ENCODE measurements at regions of chr1 and their contacts with region 1.

Region 1: DNA sequence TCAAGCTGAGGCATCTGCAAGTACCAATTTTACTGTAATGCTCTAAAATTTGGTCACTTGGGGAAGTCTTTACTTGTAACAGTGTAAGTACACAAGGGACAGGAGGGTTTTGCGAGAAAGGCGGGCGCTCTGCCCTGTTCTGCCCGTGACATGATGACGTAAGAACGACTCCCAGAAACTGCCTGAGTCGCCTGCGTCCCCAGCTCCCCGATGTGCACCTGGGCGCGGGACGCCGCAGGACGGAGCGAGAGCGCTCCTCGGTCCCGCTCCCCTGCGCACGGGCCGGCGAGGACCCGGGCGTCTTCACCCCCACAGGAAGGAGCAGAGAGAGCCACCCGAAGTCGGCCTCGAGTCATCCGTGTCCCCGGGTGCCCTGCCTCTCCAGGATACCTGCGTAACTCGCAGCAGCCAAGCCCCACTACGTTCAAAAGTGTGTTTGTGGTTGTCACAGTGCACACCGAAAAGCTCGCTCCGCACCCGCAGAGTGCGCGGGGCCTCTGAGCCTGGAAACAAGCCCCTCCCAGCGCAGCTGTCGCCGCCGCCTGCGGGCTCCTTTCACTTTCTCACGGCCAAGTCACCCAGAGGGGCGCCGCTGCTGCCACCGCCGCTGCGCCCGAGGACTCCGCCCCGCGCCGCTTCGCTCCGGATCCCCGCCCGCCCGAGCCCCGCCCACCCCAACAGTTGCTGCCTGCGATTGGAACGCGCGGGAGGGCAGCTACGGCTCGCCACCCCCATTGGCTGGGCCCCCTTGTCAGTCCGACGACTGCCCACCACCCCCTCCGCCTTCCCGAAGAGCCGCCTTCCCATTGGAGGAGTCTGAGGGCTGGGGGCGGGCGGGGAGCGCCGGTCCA is 3.2 kb upstream of the ZBTB18 start:
- DNase-seq: peak; percentile 93 to 99 (median 97)
- H3K4me3 ChIP-seq: peak overlapping the region; percentile 77 to 99
- H3K4me3 Mint-ChIP-seq: peak overlapping the region; percentile 84 to 98 (median 95)
- H3K27ac ChIP-seq: peak overlapping the region; percentile 94
- H3K27ac Mint-ChIP-seq: peak overlapping the region; percentile 91 to 100 (median 98)
- H3K4me1 ChIP-seq: peaks cover 47% of the 10 kb centered on the region
- H3K4me1 Mint-ChIP-seq: peaks cover 21 to 28% (median 27%) of the 10 kb centered on the region in 4 donors
- H3K27me3 ChIP-seq: no peaks in the 10 kb centered on the region
- H3K27me3 Mint-ChIP-seq: peaks cover 0 to 2% of the 10 kb centered on the region in 2 donors

Region 2: DNA sequence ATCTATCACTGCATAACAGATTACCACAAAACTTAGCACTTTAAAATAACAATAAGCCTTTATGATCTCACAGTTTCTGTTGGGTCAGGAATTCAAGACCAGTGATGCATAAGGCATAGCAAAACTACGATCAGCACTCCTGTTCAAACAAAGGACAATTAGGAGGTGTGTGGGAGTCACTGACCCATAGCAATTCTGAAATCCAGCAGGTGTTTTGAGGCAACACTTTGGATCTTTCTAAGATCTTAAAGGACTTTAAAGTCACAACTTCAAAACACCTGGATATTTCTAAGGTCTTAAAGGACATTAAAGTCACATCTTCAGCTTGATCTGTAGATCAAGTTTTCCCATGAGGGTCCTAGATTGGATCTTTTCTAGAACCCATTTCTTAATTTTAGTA is 233.1 kb before region 1 on chr1:
- CTCF ChIA-PET with region 1: no interaction called
- POLR2A ChIA-PET with region 1: no interaction called
- intact Hi-C with region 1: no loop called
- DNase-seq: no peak
- H3K4me3 ChIP-seq: no peak overlapping the region
- H3K4me3 Mint-ChIP-seq: peak overlapping the region in 1 of 8 donors; percentile 22
- H3K27ac ChIP-seq: no peak overlapping the region
- H3K27ac Mint-ChIP-seq: no peak overlapping the region
- H3K4me1 ChIP-seq: no peaks in the 10 kb centered on the region
- H3K4me1 Mint-ChIP-seq: peaks cover 12 to 34% (median 23%) of the 10 kb centered on the region in 4 donors
- H3K27me3 ChIP-seq: no peaks in the 10 kb centered on the region
- H3K27me3 Mint-ChIP-seq: no peaks in the 10 kb centered on the region

Region 3: DNA sequence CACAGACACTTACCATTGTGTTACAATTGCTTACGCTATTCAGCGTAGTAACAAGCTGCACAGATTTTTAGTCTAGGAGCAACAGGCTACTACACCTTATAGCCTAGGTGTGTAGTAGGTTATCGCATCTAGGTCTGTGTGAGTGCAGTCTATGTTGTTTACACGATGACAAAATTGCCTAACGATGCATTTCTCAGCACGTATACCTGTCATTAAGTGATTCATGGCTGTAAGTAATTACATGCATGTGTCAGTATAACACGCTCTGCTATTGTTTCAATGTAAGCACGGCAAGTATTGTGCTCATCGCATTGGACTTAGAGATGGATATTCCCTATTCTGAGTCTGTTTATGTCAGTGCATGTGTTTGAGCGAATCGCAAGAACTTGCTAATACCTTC is 12.5 kb before region 1 on chr1:
- CTCF ChIA-PET with region 1: no interaction called
- POLR2A ChIA-PET with region 1: interaction called, 11 read pairs
- intact Hi-C with region 1: no loop called
- DNase-seq: no peak
- H3K4me3 ChIP-seq: no peak overlapping the region
- H3K4me3 Mint-ChIP-seq: no peak overlapping the region
- H3K27ac ChIP-seq: no peak overlapping the region
- H3K27ac Mint-ChIP-seq: no peak overlapping the region
- H3K4me1 ChIP-seq: no peaks in the 10 kb centered on the region
- H3K4me1 Mint-ChIP-seq: no peaks in the 10 kb centered on the region
- H3K27me3 ChIP-seq: no peaks in the 10 kb centered on the region
- H3K27me3 Mint-ChIP-seq: peaks cover 10 to 15% of the 10 kb centered on the region in 2 donors

Region 4: DNA sequence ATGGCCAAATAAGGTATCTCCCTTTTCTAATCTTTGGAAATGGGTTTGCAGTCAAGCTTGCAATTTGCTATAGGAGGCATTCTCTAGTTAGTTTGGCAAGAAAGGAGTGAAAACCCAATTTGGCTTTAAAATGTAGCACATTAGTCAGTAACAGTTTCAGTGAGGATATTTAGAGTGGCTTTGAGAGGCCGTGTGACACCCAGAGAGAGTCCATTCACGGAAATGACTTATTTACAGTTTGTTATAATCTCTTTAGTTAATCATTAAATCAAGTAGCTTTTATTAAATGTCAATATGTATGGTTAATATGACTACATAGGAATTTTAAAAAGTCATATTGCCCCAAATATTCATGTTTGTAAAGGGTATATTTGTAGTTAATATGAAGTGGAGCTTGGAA is 12.8 kb after region 1 on chr1:
- CTCF ChIA-PET with region 1: interaction called, 4 read pairs
- POLR2A ChIA-PET with region 1: interaction called, 28 read pairs
- intact Hi-C with region 1: no loop called
- DNase-seq: no peak
- H3K4me3 ChIP-seq: no peak overlapping the region
- H3K4me3 Mint-ChIP-seq: no peak overlapping the region
- H3K27ac ChIP-seq: no peak overlapping the region
- H3K27ac Mint-ChIP-seq: no peak overlapping the region
- H3K4me1 ChIP-seq: no peaks in the 10 kb centered on the region
- H3K4me1 Mint-ChIP-seq: peaks cover 3 to 5% (median 4%) of the 10 kb centered on the region in 4 donors
- H3K27me3 ChIP-seq: no peaks in the 10 kb centered on the region
- H3K27me3 Mint-ChIP-seq: no peaks in the 10 kb centered on the region

Region 5: GRCh38 chr1:244074559-244075171 is 26.8 kb after region 1 on chr1:
- CTCF ChIA-PET with region 1: interaction called, 16 read pairs
- POLR2A ChIA-PET with region 1: interaction called, 251 read pairs
- intact Hi-C with region 1: loop called (anchors 1 kb)
- DNase-seq: peak; percentile 80 to 88 (median 86)
- H3K4me3 ChIP-seq: peak overlapping the region; percentile 5 to 49
- H3K4me3 Mint-ChIP-seq: peak overlapping the region; percentile 88 to 96 (median 91)
- H3K27ac ChIP-seq: peak overlapping the region; percentile 27
- H3K27ac Mint-ChIP-seq: peak overlapping the region; percentile 90 to 99 (median 97)
- H3K4me1 ChIP-seq: peaks cover 32% of the 10 kb centered on the region
- H3K4me1 Mint-ChIP-seq: peaks cover 26 to 38% (median 31%) of the 10 kb centered on the region in 4 donors
- H3K27me3 ChIP-seq: no peaks in the 10 kb centered on the region
- H3K27me3 Mint-ChIP-seq: no peaks in the 10 kb centered on the region

Region 6: DNA sequence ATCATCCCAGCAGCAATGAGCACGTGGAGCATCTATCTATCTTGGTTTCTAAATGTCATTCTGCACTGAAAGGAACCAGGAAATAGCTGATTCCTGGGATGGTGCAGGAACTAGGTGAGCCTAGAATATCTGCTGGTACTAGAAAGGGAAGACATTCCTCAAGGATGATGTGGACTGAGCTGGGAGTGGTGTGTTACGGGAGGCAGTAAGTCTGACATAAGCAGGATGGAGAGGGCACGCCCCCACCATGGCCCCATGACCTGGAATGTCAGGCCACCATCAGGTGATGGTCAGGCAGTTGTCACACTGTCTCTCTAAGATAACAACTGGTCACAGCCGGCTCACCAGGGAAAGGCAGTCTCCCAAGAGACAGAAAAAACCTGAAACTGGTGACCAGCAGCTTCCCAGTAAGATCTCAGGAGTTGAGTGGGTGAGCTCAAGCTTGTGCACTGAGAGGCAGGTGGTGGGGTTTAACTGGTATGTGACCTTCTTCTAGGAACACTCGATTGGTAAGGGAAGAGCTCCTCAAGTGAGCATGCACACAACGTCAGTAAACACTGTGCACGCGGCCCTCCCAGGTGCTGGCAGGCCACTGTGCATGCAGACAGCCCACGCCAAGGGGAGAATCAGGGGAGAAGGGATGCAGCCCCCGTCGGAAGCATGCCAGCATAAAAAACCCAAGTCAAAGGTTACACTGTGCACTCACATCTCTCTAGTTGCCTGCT is 255.2 kb after region 1 on chr1:
- CTCF ChIA-PET with region 1: no interaction called
- POLR2A ChIA-PET with region 1: interaction called, 10 read pairs
- intact Hi-C with region 1: no loop called
- DNase-seq: no peak
- H3K4me3 ChIP-seq: no peak overlapping the region
- H3K4me3 Mint-ChIP-seq: no peak overlapping the region
- H3K27ac ChIP-seq: no peak overlapping the region
- H3K27ac Mint-ChIP-seq: no peak overlapping the region
- H3K4me1 ChIP-seq: peaks cover 10% of the 10 kb centered on the region
- H3K4me1 Mint-ChIP-seq: peaks cover 6 to 14% (median 8%) of the 10 kb centered on the region in 4 donors
- H3K27me3 ChIP-seq: no peaks in the 10 kb centered on the region
- H3K27me3 Mint-ChIP-seq: no peaks in the 10 kb centered on the region

Region 7: DNA sequence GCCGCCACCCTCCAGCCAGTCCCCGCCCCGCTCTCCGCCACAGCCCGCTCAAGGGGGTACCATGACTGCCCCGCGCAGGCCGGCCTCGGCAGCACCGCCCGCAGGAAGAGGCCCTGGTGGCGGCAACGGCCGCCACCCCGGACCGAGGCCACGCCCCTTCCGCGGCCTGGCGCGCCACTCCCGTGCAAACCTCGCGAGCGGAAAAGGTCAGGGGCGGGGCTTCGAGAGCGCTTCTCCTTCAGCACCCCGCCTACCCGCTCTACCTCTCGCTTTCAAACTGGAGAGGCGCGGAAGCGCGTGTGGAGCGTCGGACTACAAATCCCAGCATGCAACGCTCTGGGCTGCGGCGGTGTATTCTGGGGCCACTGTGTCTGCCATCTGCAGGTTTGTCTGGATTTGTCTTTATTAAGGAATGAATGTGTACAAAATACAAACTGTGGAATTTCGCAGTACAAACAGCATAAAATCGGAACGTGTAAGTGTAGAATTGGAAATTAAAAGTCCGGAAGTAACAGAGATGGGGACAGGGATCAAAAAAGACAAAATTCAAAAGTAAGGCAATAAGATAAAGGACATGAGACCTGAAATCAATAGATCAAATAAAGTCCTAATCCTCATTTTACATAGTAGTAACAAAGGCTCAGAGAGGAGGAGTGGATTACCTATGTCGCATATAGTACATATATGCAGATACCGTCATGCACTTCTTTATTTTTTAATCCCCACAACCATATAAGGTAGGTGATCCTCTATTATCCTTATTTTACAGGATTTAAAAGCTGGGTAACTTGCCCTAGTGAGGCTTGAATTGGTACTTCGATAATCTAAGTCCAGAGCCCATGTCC is 404.3 kb after region 1 on chr1:
- CTCF ChIA-PET with region 1: no interaction called
- POLR2A ChIA-PET with region 1: interaction called, 7 read pairs
- intact Hi-C with region 1: loop called (anchors 1 kb)
- DNase-seq: peak; percentile 98 to 99 (median 99)
- H3K4me3 ChIP-seq: peak overlapping the region in 1 of 2 donors; percentile 95
- H3K4me3 Mint-ChIP-seq: peak overlapping the region; percentile 87 to 97 (median 92)
- H3K27ac ChIP-seq: peak overlapping the region; percentile 94
- H3K27ac Mint-ChIP-seq: peak overlapping the region; percentile 87 to 100 (median 95)
- H3K4me1 ChIP-seq: peaks cover 39% of the 10 kb centered on the region
- H3K4me1 Mint-ChIP-seq: peaks cover 31 to 48% (median 35%) of the 10 kb centered on the region in 4 donors
- H3K27me3 ChIP-seq: no peaks in the 10 kb centered on the region
- H3K27me3 Mint-ChIP-seq: no peaks in the 10 kb centered on the region

Region 8: GRCh38 chr1:244652699-244653466 is 605.0 kb after region 1 on chr1 and contains the start of gene DESI2:
- CTCF ChIA-PET with region 1: no interaction called
- POLR2A ChIA-PET with region 1: no interaction called
- intact Hi-C with region 1: loop called (anchors 2 kb)
- DNase-seq: peak; percentile 97 to 100 (median 99)
- H3K4me3 ChIP-seq: peak within 1 kb of the TSS; percentile 61 to 73
- H3K4me3 Mint-ChIP-seq: peak within 1 kb of the TSS; percentile 80 to 91 (median 86)
- H3K27ac ChIP-seq: peak within 1 kb of the TSS; percentile 89
- H3K27ac Mint-ChIP-seq: peak within 1 kb of the TSS; percentile 43 to 95 (median 93)
- H3K4me1 ChIP-seq: peaks cover 43% of the 10 kb centered on the region
- H3K4me1 Mint-ChIP-seq: peaks cover 21 to 24% (median 22%) of the 10 kb centered on the region in 4 donors
- H3K27me3 ChIP-seq: no peaks in the 10 kb centered on the region
- H3K27me3 Mint-ChIP-seq: no peaks in the 10 kb centered on the region
- total RNA-seq, gene DESI2: 21.1 to 22.8 TPM

Region 9: DNA sequence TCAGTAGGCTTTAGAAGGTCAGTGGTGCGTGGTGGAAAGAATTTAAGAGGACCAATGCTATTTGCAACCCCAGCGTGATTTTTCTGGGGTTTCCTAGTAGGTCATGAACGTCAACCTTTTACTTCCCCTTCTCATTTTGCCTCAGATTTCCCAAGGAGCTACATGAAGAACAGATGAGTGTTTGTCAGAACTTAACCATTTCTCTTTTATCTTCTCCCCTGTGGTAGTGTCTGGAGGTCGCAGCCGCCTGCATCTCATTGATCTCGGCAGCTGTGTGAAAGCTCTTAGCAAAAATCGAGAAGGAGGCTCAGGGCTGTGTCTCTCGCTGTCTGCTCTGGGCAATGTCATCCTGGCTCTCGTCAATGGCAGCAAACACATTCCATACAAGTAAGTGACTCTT is 1598.0 kb after region 1 on chr1:
- CTCF ChIA-PET with region 1: no interaction called
- POLR2A ChIA-PET with region 1: no interaction called
- intact Hi-C with region 1: no loop called
- DNase-seq: no peak
- H3K4me3 ChIP-seq: no peak overlapping the region
- H3K4me3 Mint-ChIP-seq: no peak overlapping the region
- H3K27ac ChIP-seq: no peak overlapping the region
- H3K27ac Mint-ChIP-seq: no peak overlapping the region
- H3K4me1 ChIP-seq: no peaks in the 10 kb centered on the region
- H3K4me1 Mint-ChIP-seq: no peaks in the 10 kb centered on the region
- H3K27me3 ChIP-seq: no peaks in the 10 kb centered on the region
- H3K27me3 Mint-ChIP-seq: peaks cover 17 to 20% of the 10 kb centered on the region in 2 donors

Measured in CD4-positive, alpha-beta memory T cell (primary cell).